ENCODE measurements at regions of chr10 and their contacts with region 1.

Region 1: DNA sequence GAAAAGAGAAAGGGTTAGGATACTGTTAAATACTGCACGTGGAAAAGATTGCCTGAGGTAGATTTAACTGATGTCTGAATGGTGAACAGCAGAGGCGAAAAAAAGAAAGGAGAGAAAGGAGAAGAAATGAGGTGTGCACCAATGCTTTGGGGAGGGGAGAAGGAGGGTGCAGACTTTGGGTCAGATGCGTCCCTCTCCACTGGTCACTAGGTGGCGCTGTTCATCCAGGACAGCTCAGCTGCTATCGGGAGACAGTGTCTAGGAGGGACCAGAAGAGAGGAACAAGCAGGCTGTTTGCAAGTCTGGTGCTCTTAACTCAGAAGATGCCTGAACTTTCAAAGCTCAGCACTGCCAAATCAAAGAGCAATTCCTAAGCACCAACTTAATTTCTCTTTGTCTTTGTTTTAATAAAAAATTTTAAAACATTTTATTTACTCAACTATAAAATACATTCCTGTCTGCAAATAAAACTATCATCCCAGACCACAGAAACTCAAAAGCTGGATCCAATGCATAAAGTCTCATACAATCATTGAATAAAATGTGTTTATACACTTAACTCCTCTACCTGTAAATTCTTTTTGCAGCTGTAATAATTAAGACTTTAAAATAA is 83.9 kb upstream of the PDLIM1 start:
- DNase-seq: peak; percentile 59
- H3K4me3 Mint-ChIP-seq: no peak overlapping the region
- H3K27ac Mint-ChIP-seq: no peak overlapping the region
- H3K4me1 Mint-ChIP-seq: peaks cover 2% of the 10 kb centered on the region
- H3K27me3 Mint-ChIP-seq: peaks cover 53% of the 10 kb centered on the region

Region 2: DNA sequence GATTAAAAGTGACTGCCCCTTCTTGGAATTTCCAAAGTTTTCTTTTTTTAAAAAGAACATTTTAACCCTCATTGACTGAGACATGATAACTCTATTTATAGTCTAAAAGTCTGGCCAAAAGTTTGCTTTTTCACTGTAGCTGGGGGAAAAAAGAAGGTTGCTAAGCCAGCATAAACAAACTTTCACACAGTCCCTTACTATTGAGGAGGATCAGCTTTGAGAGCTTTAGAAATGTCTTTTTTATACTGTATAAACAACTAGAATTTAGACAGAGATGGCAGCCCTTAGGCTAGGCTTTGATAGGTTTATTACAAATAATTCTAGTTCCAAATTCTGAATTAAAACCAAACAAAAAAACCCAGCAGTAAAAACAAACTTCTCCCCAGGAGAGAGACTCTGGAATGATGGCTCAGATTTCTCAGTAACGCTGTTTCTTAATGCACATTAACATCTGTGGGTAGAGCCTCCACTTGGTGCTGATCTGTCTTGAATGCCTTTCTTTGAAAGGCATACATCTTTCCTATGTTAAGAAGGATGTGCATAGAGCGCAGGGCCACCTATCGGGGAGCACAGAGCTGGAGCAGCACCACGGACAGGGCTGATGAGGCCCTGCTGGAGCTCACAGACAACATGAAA is 17.0 kb after region 1 on chr10:
- intact Hi-C with region 1: no loop called
- DNase-seq: no peak
- H3K4me3 Mint-ChIP-seq: no peak overlapping the region
- H3K27ac Mint-ChIP-seq: no peak overlapping the region
- H3K4me1 Mint-ChIP-seq: peaks cover 19% of the 10 kb centered on the region
- H3K27me3 Mint-ChIP-seq: peaks cover 14% of the 10 kb centered on the region

Region 3: GRCh38 chr10:95430231-95430951 is 55.7 kb after region 1 on chr10:
- intact Hi-C with region 1: loop called (anchors 1 kb)
- DNase-seq: peak; percentile 23
- H3K4me3 Mint-ChIP-seq: no peak overlapping the region
- H3K27ac Mint-ChIP-seq: no peak overlapping the region
- H3K4me1 Mint-ChIP-seq: no peaks in the 10 kb centered on the region
- H3K27me3 Mint-ChIP-seq: peaks cover 19% of the 10 kb centered on the region

Region 4: DNA sequence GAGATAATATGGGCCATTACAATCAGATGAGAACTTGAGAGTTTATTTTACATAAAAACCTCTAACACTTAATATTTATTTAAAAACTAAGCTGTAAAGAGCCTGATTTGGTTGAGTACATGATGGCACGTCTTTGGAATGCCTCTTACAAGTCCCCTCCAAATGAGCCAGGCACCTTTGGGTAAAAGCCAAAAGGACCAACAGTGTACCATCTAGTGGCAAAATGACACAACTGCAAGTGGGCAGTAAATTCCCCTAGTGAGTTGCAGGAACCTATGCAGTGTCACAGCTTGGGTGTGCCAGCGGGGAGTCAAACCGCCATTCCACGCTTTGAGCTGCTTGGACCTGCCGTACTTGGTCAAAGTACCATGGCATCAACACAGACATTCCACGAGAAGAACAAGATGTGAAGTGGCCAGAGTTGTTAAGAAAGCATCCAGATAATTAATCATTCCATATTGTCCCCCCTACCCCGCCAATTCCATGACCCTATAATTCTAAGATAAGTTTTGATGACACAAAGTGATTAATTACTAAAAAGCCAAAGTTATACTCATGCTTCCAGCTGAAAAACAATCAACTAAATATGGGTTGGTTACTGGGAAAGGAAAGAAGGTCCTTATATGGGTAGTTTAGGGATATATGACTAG is 71.3 kb after region 1 on chr10:
- intact Hi-C with region 1: loop called (anchors 1 kb)
- DNase-seq: peak; percentile 18
- H3K4me3 Mint-ChIP-seq: no peak overlapping the region
- H3K27ac Mint-ChIP-seq: no peak overlapping the region
- H3K4me1 Mint-ChIP-seq: peaks cover 7% of the 10 kb centered on the region
- H3K27me3 Mint-ChIP-seq: peaks cover 38% of the 10 kb centered on the region

Region 5: GRCh38 chr10:95601116-95601719 is 226.5 kb after region 1 on chr10:
- intact Hi-C with region 1: loop called (anchors 1 kb)
- DNase-seq: peak; percentile 20
- H3K4me3 Mint-ChIP-seq: no peak overlapping the region
- H3K27ac Mint-ChIP-seq: no peak overlapping the region
- H3K4me1 Mint-ChIP-seq: no peaks in the 10 kb centered on the region
- H3K27me3 Mint-ChIP-seq: peaks cover 10% of the 10 kb centered on the region

Measured in activated T-helper 2 cell treated with anti-CD3 and anti-CD28 coated beads, Interferon-gamma antibody, Interleukin-2, Interleukin-4, amounts not matched to agents 10 μg/mL and 5 μg/mL and 100 μg/mL, durations not matched to agents 14 hours and 24 hours and 36 hours (primary cell).